Activated CD4-positive, alpha-beta T cell treated with anti-CD3 and anti-CD28 coated beads for 36 hours (primary cell): ENCODE measurements at regions of chr5 and their contacts with region 1.

Region 1: DNA sequence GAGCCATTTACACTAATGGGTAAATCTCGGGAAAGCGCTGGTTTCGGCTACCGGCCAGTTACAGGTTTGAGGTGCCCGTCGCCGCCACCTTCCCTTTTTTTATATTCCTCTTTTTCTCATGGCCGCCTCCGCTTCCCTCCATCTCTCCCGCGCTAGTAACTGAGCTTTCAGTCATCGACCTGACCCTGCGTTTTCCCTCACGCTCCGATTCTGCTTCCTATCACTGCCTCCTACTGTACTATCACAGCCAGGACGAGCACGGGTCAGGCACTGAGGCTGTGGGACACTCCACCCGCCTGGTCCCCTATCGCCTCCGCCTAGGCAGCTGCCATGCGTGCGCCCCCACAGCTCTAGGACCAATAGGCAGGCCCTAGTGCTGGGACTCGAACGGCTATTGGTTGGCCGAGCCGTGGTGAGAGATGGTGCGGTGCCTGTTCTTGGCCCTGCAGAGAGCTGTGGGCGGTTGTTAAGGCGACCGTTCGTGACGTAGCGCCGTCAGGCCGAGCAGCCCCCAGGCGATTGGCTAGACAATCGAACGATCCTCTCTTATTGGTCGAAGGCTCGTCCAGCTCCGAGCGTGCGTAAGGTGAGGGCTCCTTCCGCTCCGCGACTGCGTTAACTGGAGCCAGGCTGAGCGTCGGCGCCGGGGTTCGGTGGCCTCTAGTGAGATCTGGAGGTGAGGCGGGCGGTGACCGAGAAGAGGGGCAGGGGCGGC is at the start of gene HMGCR:
- DNase-seq: peak; percentile 99
- ATAC-seq: peak; percentile 96
- H3K4me3 Mint-ChIP-seq: no peak within 1 kb of the TSS
- H3K27ac Mint-ChIP-seq: no peak within 1 kb of the TSS
- H3K4me1 Mint-ChIP-seq: peaks cover 31% of the 10 kb centered on the region
- H3K27me3 Mint-ChIP-seq: no peaks in the 10 kb centered on the region
- total RNA-seq, gene HMGCR: 36.1 to 51.1 TPM

Region 2: DNA sequence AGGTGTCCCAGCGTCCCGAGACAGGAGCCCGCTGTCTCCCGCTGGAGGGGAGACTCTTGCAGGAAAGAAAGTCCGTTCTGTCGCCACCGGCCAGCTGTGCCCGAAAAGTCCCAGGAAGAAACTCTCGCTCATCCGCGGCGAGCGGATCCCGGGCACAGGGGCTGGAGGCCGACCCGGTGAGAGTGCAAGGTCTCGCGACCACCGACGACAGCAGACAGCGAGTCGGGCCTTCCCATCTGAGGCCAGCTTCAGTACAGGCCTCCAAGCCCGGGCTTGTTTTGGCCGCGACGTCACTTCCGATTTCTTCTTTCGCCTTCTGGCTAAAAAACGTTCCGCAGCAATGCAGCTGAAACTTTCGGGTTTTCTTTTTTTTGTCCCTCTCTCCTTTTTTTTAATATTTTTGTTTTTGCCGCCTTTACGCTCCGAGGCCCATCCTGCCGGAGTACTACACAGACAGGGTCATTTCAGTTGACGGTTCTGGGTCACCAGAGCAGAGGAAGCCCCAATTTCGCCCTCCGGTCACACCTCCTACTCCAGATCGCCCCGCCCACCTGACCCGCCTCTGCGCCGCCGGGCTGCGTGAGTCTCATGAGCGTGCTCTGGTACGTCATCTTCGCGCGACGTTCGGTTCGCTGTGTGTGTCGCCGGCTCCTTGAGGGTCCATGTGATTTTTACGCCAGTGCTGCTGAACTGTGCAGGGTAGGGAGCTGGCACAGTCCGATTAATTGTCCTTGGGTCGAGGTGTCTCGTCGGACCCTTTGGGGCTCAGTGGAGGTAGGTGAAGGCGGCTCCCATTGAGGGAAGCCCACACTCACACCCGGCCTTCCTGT is 1771.4 kb before region 1 on chr5 and contains the starts of genes ANKRA2 and UTP15:
- CTCF ChIA-PET with region 1: no interaction called
- POLR2A ChIA-PET with region 1: no interaction called
- intact Hi-C with region 1: loop called in 1 of 2 experiments (anchors 10 kb)
- DNase-seq: peak; percentile 100
- ATAC-seq: peak; percentile 92
- H3K4me3 Mint-ChIP-seq: peak within 1 kb of the TSS; percentile 93
- H3K27ac Mint-ChIP-seq: peak within 1 kb of the TSS; percentile 100
- H3K4me1 Mint-ChIP-seq: peaks cover 33% of the 10 kb centered on the region
- H3K27me3 Mint-ChIP-seq: no peaks in the 10 kb centered on the region
- total RNA-seq, gene ANKRA2: 16.3 to 18.4 TPM
- total RNA-seq, gene UTP15: 33.6 to 42.4 TPM

Region 3: DNA sequence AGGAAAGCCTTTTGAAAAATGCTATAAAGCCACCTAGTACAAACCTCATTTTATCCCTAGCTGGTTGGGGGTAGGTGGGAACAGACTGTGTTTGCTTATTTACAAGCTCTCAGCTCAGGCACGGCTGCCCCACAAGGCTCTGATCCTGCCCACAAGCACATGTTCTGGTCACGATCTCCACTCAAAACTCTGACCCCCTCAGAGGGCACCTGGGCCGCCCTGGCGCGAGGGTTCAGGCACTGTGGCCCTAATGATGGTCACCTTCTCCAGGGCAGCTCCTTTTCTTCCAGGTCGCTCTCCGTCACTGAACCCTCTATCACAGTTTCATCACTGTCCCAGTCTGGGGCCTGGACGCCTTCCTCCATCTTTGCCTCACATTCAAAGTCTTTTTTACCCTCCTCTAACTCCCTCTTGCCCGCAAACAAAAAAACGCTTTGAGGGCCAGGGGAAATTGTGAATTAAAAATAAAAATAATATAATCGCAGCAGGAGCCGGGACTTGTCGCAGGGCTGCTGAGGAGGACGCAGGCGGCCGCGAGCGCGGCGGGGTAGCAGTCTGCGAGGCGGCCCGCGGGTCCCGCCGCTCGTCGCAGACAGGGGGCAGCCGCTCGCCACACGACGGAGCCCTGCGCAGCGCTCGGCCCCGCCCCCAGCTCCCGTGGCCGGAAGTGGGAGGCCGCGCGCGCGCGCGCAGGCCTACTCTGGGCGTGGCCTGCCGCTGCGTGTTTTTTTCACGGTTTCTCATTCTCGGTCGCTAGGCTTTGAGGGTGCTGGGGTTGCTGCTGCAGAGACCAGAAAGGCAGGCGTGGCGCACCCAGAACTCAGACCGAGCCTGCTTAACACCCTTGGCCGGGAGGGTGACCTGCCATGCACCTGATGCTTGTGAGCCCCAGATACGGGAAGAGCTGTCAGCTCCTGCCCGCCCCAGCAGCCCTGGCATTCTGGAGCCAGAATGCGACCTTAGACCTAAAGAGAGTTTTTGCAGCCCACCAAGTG is 100.2 kb before region 1 on chr5 and contains the start of gene ANKRD31:
- CTCF ChIA-PET with region 1: interaction called, 19 read pairs
- POLR2A ChIA-PET with region 1: interaction called, 16 read pairs
- intact Hi-C with region 1: loop called (anchors 1 to 2 kb)
- DNase-seq: peak; percentile 94
- ATAC-seq: peak; percentile 97
- H3K4me3 Mint-ChIP-seq: peak within 1 kb of the TSS; percentile 87
- H3K27ac Mint-ChIP-seq: peak within 1 kb of the TSS; percentile 96
- H3K4me1 Mint-ChIP-seq: peaks cover 8% of the 10 kb centered on the region
- H3K27me3 Mint-ChIP-seq: no peaks in the 10 kb centered on the region
- total RNA-seq, gene ANKRD31: 0.66 to 0.67 TPM

Region 4: DNA sequence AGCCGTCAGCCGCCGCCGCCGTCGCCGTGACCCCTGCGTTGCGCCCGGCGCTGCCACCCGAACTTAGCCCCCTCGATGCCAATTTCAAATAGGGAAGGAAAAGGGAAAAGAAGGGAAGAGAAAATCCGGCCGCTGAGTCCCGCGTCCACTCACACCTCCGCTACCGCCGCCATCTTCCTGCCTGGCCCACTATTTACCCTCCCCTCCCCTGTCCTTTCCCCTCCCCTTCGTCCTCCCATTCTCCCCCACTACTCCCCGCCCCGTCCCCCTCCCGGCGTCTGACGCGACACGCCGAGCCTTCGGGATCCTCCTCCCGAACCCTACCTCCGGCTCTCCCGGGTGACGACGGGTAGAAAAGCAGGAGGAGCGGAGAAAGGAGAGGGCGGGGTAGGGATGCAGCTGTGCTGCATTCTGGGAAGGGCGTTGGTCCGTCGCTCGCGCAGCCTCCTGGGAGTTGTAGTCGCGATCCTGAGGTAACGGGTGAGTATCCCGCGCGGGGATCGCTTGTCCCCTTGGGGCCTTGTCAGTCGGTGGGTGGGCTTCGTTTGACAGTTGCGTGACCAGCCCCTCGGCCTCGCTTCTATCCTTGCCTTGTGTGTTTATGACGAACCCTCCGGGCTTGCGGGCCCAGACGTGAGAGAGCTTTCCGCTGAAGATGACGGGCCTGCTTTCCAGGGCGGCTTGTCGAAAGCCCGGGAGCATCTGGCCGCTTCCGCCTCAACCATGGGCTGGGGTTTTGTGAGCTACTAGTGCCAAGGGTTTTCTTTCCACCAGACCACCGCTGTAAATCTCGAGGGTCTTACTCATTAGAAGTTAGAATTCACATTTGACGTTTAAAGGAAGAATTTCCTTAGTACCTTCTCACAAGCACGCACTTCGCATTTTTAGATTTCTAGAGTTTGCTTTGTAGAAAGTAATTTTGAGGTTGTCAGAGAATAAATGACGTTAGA is 174.9 kb after region 1 on chr5 and contains the starts of genes CERT1 and POLK:
- CTCF ChIA-PET with region 1: interaction called, 6 read pairs
- POLR2A ChIA-PET with region 1: interaction called, 5 read pairs
- intact Hi-C with region 1: loop called (anchors 1 to 5 kb)
- DNase-seq: peak; percentile 98
- ATAC-seq: peak; percentile 96
- H3K4me3 Mint-ChIP-seq: peak within 1 kb of the TSS; percentile 98
- H3K27ac Mint-ChIP-seq: peak within 1 kb of the TSS; percentile 96
- H3K4me1 Mint-ChIP-seq: peaks cover 47% of the 10 kb centered on the region
- H3K27me3 Mint-ChIP-seq: no peaks in the 10 kb centered on the region
- total RNA-seq, gene CERT1: 21.6 to 24.5 TPM
- total RNA-seq, gene POLK: 35.5 to 49.1 TPM

Region 5: GRCh38 chr5:75668977-75669689 is 332.4 kb after region 1 on chr5:
- CTCF ChIA-PET with region 1: no interaction called
- POLR2A ChIA-PET with region 1: no interaction called
- intact Hi-C with region 1: loop called in 1 of 2 experiments (anchors 5 kb)
- DNase-seq: peak; percentile 82
- ATAC-seq: peak; percentile 97
- H3K4me3 Mint-ChIP-seq: peak overlapping the region; percentile 67
- H3K27ac Mint-ChIP-seq: peak overlapping the region; percentile 91
- H3K4me1 Mint-ChIP-seq: peaks cover 37% of the 10 kb centered on the region
- H3K27me3 Mint-ChIP-seq: no peaks in the 10 kb centered on the region

Region 6: GRCh38 chr5:76256116-76256889 is 919.5 kb after region 1 on chr5:
- CTCF ChIA-PET with region 1: no interaction called
- POLR2A ChIA-PET with region 1: no interaction called
- intact Hi-C with region 1: loop called in 1 of 2 experiments (anchors 10 kb)
- DNase-seq: peak; percentile 76
- ATAC-seq: peak; percentile 96
- H3K4me3 Mint-ChIP-seq: no peak overlapping the region
- H3K27ac Mint-ChIP-seq: no peak overlapping the region
- H3K4me1 Mint-ChIP-seq: peaks cover 7% of the 10 kb centered on the region
- H3K27me3 Mint-ChIP-seq: peaks cover 9% of the 10 kb centered on the region